Activated CD4-positive, alpha-beta memory T cell treated with anti-CD3 and anti-CD28 coated beads for 36 hours (primary cell): ENCODE measurements at regions of chr11 and their contacts with region 1.

Region 1: GRCh38 chr11:88552377-88553062 is 215.0 kb upstream of the CTSC start:
- DNase-seq: peak; percentile 73
- H3K4me3 Mint-ChIP-seq: no peak overlapping the region
- H3K27ac Mint-ChIP-seq: no peak overlapping the region
- H3K4me1 Mint-ChIP-seq: no peaks in the 10 kb centered on the region
- H3K27me3 Mint-ChIP-seq: peaks cover 5% of the 10 kb centered on the region

Region 2: DNA sequence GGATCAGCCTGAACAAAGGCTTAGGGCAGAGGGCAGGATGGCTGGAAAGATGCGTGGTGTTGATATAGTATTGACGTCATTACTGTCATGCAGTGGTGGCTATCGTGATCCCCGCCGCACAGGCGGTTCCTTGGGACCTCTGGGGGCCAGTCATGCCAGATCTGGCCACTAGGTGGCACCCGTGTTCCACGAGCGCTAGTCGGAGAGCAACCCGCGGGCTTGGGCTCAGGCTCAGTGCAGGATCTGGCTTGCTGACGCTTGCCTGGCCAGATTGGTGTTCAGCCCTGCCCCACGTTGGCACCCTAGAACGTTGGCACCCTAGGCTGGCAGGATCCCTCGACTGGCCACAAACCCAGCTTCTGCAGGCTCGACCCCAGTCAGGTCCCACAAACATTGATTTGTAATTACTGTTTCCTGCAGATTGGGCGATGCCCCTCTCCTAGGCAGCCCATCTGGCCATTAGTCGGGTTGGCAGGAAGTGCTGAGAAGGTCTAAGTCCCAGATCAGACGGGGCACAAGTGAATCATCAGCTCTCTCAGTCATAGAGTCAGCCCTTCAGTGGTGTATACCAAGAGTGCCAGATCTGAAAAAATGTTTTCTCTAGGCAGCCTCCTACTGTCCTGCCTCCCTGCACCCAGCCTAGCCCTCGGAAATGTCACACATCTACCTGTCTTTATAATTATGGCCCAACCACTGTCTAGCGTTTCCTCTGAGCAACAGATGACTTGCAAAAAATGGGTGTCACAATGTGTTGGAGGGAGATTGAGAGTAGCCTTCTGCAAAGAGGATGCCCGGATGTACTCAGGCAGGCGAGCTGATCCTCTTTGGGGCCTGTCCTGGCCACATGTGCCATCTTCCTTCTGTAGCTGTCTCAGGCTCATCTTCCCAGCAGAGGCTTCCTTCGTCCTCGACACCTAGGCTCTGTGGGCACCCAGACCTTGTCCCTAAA is 1199.5 kb before region 1 on chr11:
- CTCF ChIA-PET with region 1: interaction called, 10 read pairs
- POLR2A ChIA-PET with region 1: no interaction called
- intact Hi-C with region 1: no loop called
- DNase-seq: peak; percentile 90
- H3K4me3 Mint-ChIP-seq: no peak overlapping the region
- H3K27ac Mint-ChIP-seq: no peak overlapping the region
- H3K4me1 Mint-ChIP-seq: peaks cover 8% of the 10 kb centered on the region
- H3K27me3 Mint-ChIP-seq: peaks cover 5% of the 10 kb centered on the region

Region 3: DNA sequence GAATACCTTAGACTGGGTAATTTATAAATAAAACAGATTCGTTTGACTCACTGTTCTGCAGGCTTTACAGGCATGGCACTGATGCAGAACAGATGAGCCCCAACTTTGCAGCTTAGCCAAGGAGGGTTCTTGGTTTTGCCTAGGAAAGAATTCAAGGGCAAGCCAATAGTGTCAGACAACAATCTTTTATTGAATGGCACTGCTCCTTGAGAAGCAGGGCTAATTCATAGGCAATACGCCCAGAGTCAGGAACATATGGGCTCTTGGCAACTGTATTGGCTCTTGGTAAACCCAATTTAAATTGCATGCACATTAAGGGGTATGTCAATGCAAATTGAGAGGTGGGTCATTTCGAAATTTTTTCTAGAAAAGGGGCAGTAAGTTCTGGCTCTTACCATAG is 465.2 kb before region 1 on chr11:
- CTCF ChIA-PET with region 1: no interaction called
- POLR2A ChIA-PET with region 1: no interaction called
- intact Hi-C with region 1: no loop called
- DNase-seq: no peak
- H3K4me3 Mint-ChIP-seq: no peak overlapping the region
- H3K27ac Mint-ChIP-seq: no peak overlapping the region
- H3K4me1 Mint-ChIP-seq: no peaks in the 10 kb centered on the region
- H3K27me3 Mint-ChIP-seq: peaks cover 4% of the 10 kb centered on the region

Region 4: GRCh38 chr11:88103337-88104206 is 448.9 kb before region 1 on chr11:
- CTCF ChIA-PET with region 1: interaction called, 34 read pairs
- POLR2A ChIA-PET with region 1: no interaction called
- intact Hi-C with region 1: no loop called
- DNase-seq: peak; percentile 33
- H3K4me3 Mint-ChIP-seq: no peak overlapping the region
- H3K27ac Mint-ChIP-seq: no peak overlapping the region
- H3K4me1 Mint-ChIP-seq: no peaks in the 10 kb centered on the region
- H3K27me3 Mint-ChIP-seq: peaks cover 9% of the 10 kb centered on the region

Region 5: GRCh38 chr11:88484873-88485621 is 67.5 kb before region 1 on chr11:
- CTCF ChIA-PET with region 1: interaction called, 13 read pairs
- POLR2A ChIA-PET with region 1: no interaction called
- intact Hi-C with region 1: no loop called
- DNase-seq: peak; percentile 44
- H3K4me3 Mint-ChIP-seq: no peak overlapping the region
- H3K27ac Mint-ChIP-seq: no peak overlapping the region
- H3K4me1 Mint-ChIP-seq: peaks cover 2% of the 10 kb centered on the region
- H3K27me3 Mint-ChIP-seq: peaks cover 3% of the 10 kb centered on the region

Region 6: GRCh38 chr11:88569342-88569741 is 16.8 kb after region 1 on chr11:
- CTCF ChIA-PET with region 1: interaction called, 11 read pairs
- POLR2A ChIA-PET with region 1: no interaction called
- intact Hi-C with region 1: no loop called
- DNase-seq: no peak
- H3K4me3 Mint-ChIP-seq: no peak overlapping the region
- H3K27ac Mint-ChIP-seq: no peak overlapping the region
- H3K4me1 Mint-ChIP-seq: no peaks in the 10 kb centered on the region
- H3K27me3 Mint-ChIP-seq: no peaks in the 10 kb centered on the region